CD4-positive, alpha-beta memory T cell (primary cell): ENCODE measurements at regions of chr4 and their contacts with region 1.

Region 1: DNA sequence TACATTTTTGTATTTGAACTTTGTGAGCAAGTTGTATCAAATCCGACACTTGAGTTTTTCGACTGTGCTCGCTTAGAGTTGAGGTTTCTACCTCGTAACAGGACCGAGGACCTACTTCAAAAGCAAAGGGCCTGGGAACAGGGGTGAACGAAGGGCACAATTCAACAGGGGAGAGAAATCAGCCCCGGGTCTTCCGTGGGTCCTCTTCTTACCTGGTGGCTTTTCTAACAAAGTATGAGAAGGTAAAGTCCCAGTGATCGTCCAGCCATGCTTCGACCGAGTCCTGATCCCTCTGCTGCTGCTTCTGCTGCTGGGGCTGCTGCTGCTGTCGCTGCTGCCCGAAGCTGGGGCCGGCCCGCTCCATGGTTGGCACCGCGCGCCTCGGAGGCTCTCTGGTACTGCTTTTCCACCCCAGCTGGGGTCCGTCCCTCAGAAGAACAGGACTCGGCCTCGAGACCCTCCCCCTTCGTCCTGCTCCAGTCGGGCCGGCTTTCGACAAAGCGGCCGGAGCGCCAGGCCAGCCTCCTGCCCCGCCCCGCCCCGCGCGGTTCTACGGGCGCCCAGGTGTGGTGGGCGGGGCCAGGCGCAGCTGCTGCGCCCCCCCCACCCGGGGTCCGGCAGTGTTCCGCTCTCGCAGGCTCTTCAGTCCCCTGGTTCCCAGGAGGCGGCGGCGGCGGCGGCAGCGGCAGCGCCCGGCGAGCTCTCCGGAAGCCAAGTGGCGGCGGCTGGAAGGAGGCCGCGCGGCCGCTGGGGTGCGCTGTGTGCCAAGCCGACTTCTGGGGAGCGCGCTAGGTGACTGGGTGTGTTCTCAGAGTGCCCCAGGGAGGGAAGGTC is at the start of gene PDE5A:
- DNase-seq: peak; percentile 67 to 75 (median 71)
- H3K4me3 ChIP-seq: peak within 1 kb of the TSS; percentile 33 to 67
- H3K4me3 Mint-ChIP-seq: peak within 1 kb of the TSS; percentile 89 to 94 (median 92)
- H3K27ac ChIP-seq: peak within 1 kb of the TSS; percentile 48
- H3K27ac Mint-ChIP-seq: peak within 1 kb of the TSS; percentile 72 to 91 (median 85)
- H3K4me1 ChIP-seq: peaks cover 16% of the 10 kb centered on the region
- H3K4me1 Mint-ChIP-seq: peaks cover 7 to 26% (median 16%) of the 10 kb centered on the region in 4 donors
- H3K27me3 ChIP-seq: peaks cover 4% of the 10 kb centered on the region
- H3K27me3 Mint-ChIP-seq: peaks cover 4 to 7% of the 10 kb centered on the region in 2 donors
- total RNA-seq, gene PDE5A: 1.8 to 2.9 TPM

Region 2: GRCh38 chr4:118772081-118772766 is 856.3 kb before region 1 on chr4:
- CTCF ChIA-PET with region 1: no interaction called
- POLR2A ChIA-PET with region 1: no interaction called
- intact Hi-C with region 1: loop called (anchors 5 kb)
- DNase-seq: peak in 4 of 5 donors; percentile 40 to 49 (median 44)
- H3K4me3 ChIP-seq: no peak overlapping the region
- H3K4me3 Mint-ChIP-seq: no peak overlapping the region
- H3K27ac ChIP-seq: no peak overlapping the region
- H3K27ac Mint-ChIP-seq: peak overlapping the region in 1 of 7 donors; percentile 42
- H3K4me1 ChIP-seq: no peaks in the 10 kb centered on the region
- H3K4me1 Mint-ChIP-seq: no peaks in the 10 kb centered on the region
- H3K27me3 ChIP-seq: no peaks in the 10 kb centered on the region
- H3K27me3 Mint-ChIP-seq: no peaks in the 10 kb centered on the region

Region 3: DNA sequence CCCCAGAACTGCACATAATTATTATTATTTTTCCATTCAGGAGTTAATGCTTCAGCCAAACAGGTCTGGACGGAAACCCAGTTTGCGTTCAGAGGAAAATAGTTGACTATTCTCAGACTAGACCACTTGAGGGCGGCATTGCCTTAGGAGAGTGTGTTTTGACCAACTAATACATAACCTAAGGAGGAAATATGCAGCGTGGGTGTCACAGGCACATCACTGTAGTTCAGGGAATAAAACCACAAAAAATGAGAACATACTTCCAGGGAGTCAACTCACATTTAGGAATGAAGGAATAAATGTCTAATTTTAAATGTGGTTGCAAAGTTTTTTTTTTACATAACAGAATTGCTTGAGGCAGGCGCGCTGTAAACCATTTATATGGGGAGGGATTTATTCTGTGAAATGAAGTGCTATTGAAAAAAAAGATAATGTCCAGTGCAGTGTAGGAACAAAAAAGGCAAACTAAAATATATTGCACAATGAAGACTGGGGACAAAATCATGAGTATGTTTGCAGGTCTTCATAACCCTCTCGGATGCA is 646.6 kb before region 1 on chr4:
- CTCF ChIA-PET with region 1: interaction called, 5 read pairs
- POLR2A ChIA-PET with region 1: no interaction called
- intact Hi-C with region 1: loop called (anchors 1 kb)
- DNase-seq: peak; percentile 42 to 53 (median 52)
- H3K4me3 ChIP-seq: no peak overlapping the region
- H3K4me3 Mint-ChIP-seq: no peak overlapping the region
- H3K27ac ChIP-seq: no peak overlapping the region
- H3K27ac Mint-ChIP-seq: no peak overlapping the region
- H3K4me1 ChIP-seq: no peaks in the 10 kb centered on the region
- H3K4me1 Mint-ChIP-seq: no peaks in the 10 kb centered on the region
- H3K27me3 ChIP-seq: no peaks in the 10 kb centered on the region
- H3K27me3 Mint-ChIP-seq: peaks cover 3 to 5% of the 10 kb centered on the region in 2 donors

Region 4: DNA sequence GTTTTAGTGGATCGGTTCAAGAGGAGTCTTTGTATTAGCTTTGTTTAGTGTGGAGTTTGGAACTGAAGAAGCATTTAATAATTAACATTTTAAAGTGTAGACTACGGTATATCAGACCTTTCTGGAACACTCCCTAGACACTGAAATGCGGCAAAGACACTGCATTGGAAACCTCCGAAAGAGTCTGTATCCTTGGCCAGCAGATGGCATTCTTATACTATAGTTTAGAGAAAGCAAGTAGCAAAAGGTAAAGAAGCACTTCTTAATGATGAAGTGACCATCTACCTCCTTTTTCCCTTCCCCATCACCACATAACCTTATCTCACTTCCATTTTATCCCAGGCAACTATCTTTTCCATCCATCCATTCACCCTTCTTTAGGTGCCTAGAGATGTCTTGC is 314.2 kb before region 1 on chr4:
- CTCF ChIA-PET with region 1: interaction called, 3 read pairs
- POLR2A ChIA-PET with region 1: no interaction called
- intact Hi-C with region 1: loop called (anchors 1 kb)
- DNase-seq: peak in 4 of 5 donors; percentile 33 to 46 (median 40)
- H3K4me3 ChIP-seq: no peak overlapping the region
- H3K4me3 Mint-ChIP-seq: no peak overlapping the region
- H3K27ac ChIP-seq: no peak overlapping the region
- H3K27ac Mint-ChIP-seq: no peak overlapping the region
- H3K4me1 ChIP-seq: no peaks in the 10 kb centered on the region
- H3K4me1 Mint-ChIP-seq: no peaks in the 10 kb centered on the region
- H3K27me3 ChIP-seq: no peaks in the 10 kb centered on the region
- H3K27me3 Mint-ChIP-seq: peaks cover 7 to 9% of the 10 kb centered on the region in 2 donors

Region 5: DNA sequence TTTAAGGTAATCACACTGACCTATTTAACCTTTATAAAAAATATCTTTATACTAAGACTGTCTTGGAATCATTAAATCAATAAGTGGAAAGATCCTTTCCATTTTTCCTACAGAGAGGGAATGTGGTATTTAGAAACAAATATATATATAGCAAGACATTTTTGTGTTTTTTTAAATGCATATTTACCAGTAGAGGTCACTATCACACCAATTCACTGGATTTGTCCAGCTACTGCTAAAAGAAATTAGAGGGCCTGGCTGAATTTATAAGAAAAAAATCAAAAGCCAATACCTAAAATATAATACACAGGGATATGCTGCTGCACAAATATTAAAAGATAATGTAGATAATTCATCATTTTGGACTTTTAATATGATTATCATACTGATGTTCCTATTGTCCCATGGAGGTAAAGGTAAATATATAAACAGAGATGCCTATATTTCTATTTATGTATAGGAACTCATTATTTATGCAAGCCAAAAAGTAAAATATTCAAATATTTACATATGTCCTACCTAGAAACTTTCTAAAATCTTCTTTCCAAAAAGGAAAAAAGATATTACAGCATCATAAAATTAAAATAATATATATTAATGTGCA is 69.4 kb before region 1 on chr4:
- CTCF ChIA-PET with region 1: interaction called, 5 read pairs
- POLR2A ChIA-PET with region 1: no interaction called
- intact Hi-C with region 1: loop called (anchors 5 kb)
- DNase-seq: peak in 3 of 5 donors; percentile 1 to 7 (median 5)
- H3K4me3 ChIP-seq: no peak overlapping the region
- H3K4me3 Mint-ChIP-seq: no peak overlapping the region
- H3K27ac ChIP-seq: no peak overlapping the region
- H3K27ac Mint-ChIP-seq: no peak overlapping the region
- H3K4me1 ChIP-seq: no peaks in the 10 kb centered on the region
- H3K4me1 Mint-ChIP-seq: no peaks in the 10 kb centered on the region
- H3K27me3 ChIP-seq: no peaks in the 10 kb centered on the region
- H3K27me3 Mint-ChIP-seq: no peaks in the 10 kb centered on the region

Region 6: DNA sequence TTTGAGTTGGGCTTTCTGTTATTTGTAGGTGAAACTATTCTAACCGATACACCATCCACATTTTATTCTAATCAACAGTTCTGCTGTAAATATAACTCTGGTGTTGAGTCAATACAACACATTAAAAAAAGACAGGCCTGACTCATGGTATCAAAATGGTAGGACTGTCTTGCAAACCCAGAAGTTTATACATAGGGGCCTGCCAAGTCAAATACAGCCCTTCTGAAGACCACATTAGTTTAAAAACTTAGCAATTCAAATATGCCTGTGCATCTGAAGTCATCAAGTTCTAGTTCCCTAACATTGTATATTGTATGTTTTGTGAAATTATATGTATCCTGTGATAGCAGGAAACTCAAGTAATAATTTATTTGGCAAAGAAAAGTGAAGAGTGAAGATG is 24.5 kb after region 1 on chr4:
- CTCF ChIA-PET with region 1: interaction called, 16 read pairs
- POLR2A ChIA-PET with region 1: no interaction called
- intact Hi-C with region 1: no loop called
- DNase-seq: no peak
- H3K4me3 ChIP-seq: no peak overlapping the region
- H3K4me3 Mint-ChIP-seq: no peak overlapping the region
- H3K27ac ChIP-seq: no peak overlapping the region
- H3K27ac Mint-ChIP-seq: no peak overlapping the region
- H3K4me1 ChIP-seq: no peaks in the 10 kb centered on the region
- H3K4me1 Mint-ChIP-seq: no peaks in the 10 kb centered on the region
- H3K27me3 ChIP-seq: no peaks in the 10 kb centered on the region
- H3K27me3 Mint-ChIP-seq: peaks cover 0 to 9% of the 10 kb centered on the region in 2 donors

Region 7: GRCh38 chr4:120049732-120050494 is 421.4 kb after region 1 on chr4:
- CTCF ChIA-PET with region 1: interaction called, 10 read pairs
- POLR2A ChIA-PET with region 1: no interaction called
- intact Hi-C with region 1: loop called (anchors 1 kb)
- DNase-seq: peak; percentile 63 to 74 (median 69)
- H3K4me3 ChIP-seq: no peak overlapping the region
- H3K4me3 Mint-ChIP-seq: peak overlapping the region in 6 of 8 donors; percentile 13 to 87 (median 46)
- H3K27ac ChIP-seq: no peak overlapping the region
- H3K27ac Mint-ChIP-seq: peak overlapping the region in 1 of 7 donors; percentile 35
- H3K4me1 ChIP-seq: no peaks in the 10 kb centered on the region
- H3K4me1 Mint-ChIP-seq: peaks cover 2 to 6% (median 3%) of the 10 kb centered on the region in 4 donors
- H3K27me3 ChIP-seq: no peaks in the 10 kb centered on the region
- H3K27me3 Mint-ChIP-seq: no peaks in the 10 kb centered on the region